B cell (primary cell): ENCODE measurements at regions of chr15 and their contacts with region 1.

Region 1: DNA sequence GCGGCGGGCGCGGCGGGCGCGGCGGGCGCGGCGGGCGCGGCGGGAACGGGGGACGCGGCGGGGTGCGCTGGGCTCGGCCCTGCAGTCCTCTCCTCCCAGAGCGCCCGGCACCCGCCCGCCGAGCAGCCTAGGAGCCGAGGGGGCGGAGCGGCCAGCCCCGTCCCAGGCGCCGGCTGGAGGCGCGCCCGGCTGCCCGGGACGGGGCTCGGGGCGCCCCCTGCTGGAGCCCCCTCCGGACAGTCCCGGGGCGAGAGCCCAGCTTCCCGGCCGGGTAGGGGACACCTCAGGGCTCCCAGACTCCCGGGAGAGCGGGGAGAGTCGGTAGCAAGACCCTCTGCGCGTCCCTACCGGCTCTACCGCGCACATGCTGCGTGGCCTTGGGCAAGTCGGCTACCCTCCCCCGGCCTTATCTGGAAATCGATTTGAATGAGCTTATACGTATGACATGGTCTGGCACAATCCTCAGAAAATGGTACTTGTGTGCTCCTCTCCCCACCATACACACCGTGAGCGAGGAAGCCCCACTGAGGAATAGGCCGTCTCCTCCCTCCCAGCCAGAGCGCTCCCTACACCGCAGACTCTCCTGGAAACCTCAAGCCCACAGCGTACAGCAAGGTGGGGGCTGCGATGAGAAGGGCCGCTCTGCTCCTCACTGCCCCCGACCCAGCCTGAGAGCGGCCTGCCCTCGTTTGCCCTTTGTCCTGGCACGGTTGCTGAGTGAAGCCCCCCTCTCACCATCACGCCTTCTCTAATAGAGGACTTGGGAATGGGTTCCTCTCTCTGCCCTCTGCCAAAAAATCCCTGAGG is at the start of gene DAPK2:
- DNase-seq: peak; percentile 70
- ATAC-seq: peak; percentile 61
- H3K4me3 ChIP-seq: peak within 1 kb of the TSS; percentile 34 to 54 (median 43)
- H3K4me3 Mint-ChIP-seq: peak within 1 kb of the TSS; percentile 86
- H3K27ac ChIP-seq: no peak within 1 kb of the TSS
- H3K27ac Mint-ChIP-seq: peak within 1 kb of the TSS; percentile 91
- H3K4me1 ChIP-seq: peaks cover 61 to 71% of the 10 kb centered on the region in 2 donors
- H3K4me1 Mint-ChIP-seq: peaks cover 59% of the 10 kb centered on the region
- H3K27me3 ChIP-seq: no peaks in the 10 kb centered on the region
- H3K27me3 Mint-ChIP-seq: no peaks in the 10 kb centered on the region
- CTCF ChIP-seq: peak; percentile 67
- total RNA-seq, gene DAPK2: 31.0 and 31.9 TPM in 2 replicates

Region 2: DNA sequence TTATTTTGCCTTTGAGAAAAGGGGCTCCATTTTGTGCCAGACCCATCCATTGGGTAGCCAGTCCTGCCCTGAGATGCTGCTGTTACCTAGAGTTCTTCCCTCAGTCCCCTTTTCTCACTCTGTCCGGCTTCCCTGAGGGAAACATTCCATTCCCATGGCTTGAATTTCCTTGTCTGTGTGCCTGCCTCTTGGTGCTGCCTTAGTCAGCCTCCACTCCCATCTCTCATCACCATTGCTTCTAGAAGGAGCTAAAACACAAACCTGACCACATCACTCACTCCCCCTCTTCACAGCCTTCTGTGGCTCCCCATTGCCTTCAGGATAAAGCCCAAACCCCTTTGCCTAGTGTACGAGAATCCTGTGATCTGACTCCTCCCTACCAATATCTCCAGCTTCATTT is 1856.3 kb before region 1 on chr15:
- CTCF ChIA-PET with region 1: no interaction called
- POLR2A ChIA-PET with region 1: no interaction called
- intact Hi-C with region 1: no loop called
- DNase-seq: no peak
- ATAC-seq: no peak
- H3K4me3 ChIP-seq: no peak overlapping the region
- H3K4me3 Mint-ChIP-seq: no peak overlapping the region
- H3K27ac ChIP-seq: no peak overlapping the region
- H3K27ac Mint-ChIP-seq: no peak overlapping the region
- H3K4me1 ChIP-seq: no peaks in the 10 kb centered on the region
- H3K4me1 Mint-ChIP-seq: no peaks in the 10 kb centered on the region
- H3K27me3 ChIP-seq: peaks cover 0 to 3% (median 0%) of the 10 kb centered on the region in 4 experiments
- H3K27me3 Mint-ChIP-seq: peaks cover 23% of the 10 kb centered on the region
- CTCF ChIP-seq: no peak

Region 3: GRCh38 chr15:63565536-63566186 is 480.9 kb before region 1 on chr15:
- CTCF ChIA-PET with region 1: no interaction called
- POLR2A ChIA-PET with region 1: no interaction called
- intact Hi-C with region 1: no loop called
- DNase-seq: no peak
- ATAC-seq: no peak
- H3K4me3 ChIP-seq: no peak overlapping the region
- H3K4me3 Mint-ChIP-seq: no peak overlapping the region
- H3K27ac ChIP-seq: no peak overlapping the region
- H3K27ac Mint-ChIP-seq: peak overlapping the region; percentile 8
- H3K4me1 ChIP-seq: no peaks in the 10 kb centered on the region
- H3K4me1 Mint-ChIP-seq: peaks cover 15% of the 10 kb centered on the region
- H3K27me3 ChIP-seq: no peaks in the 10 kb centered on the region
- H3K27me3 Mint-ChIP-seq: no peaks in the 10 kb centered on the region
- CTCF ChIP-seq: no peak

Region 4: GRCh38 chr15:63826528-63826927 is 220.0 kb before region 1 on chr15:
- CTCF ChIA-PET with region 1: interaction called, 13 read pairs
- POLR2A ChIA-PET with region 1: interaction called, 3 read pairs
- intact Hi-C with region 1: loop called (anchors 5 kb)
- DNase-seq: peak; percentile 62
- ATAC-seq: peak; percentile 31
- H3K4me3 ChIP-seq: no peak overlapping the region
- H3K4me3 Mint-ChIP-seq: no peak overlapping the region
- H3K27ac ChIP-seq: no peak overlapping the region
- H3K27ac Mint-ChIP-seq: peak overlapping the region; percentile 73
- H3K4me1 ChIP-seq: peaks cover 4 to 13% of the 10 kb centered on the region in 2 donors
- H3K4me1 Mint-ChIP-seq: peaks cover 58% of the 10 kb centered on the region
- H3K27me3 ChIP-seq: no peaks in the 10 kb centered on the region
- H3K27me3 Mint-ChIP-seq: no peaks in the 10 kb centered on the region
- CTCF ChIP-seq: peak; percentile 56

Region 5: DNA sequence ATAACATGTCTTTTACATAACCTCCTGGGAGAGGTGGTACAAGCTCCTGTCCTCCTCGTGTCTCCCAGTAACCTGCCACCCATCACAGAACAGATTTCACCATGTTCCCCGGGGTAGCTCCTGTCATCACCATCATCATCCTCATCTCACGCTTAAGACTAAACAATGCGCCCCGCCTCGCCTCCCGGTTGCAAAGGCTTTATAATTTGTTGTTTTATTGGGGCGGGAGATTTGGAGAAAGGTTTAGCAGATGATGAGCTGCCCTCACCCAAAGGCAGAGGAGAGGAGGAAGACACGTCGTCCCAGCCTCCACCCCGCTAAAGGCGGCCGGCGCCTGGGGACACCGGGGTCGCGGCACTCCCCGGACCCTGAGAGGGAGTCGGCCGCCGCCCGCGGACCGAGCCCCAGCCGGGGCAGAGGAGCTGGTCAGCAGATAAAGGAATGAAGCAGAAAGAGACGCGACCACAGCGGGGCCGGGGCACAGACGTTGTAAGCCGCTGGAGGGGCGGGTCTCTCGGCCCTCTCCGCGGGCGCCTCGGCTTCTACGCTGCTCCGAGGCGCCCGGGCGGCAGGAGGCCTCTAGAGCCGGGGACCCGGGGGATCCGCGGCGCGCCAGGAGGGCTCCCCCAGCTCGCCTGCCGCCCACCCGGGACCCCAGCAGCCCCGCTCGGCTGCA is 213.4 kb before region 1 on chr15:
- CTCF ChIA-PET with region 1: interaction called, 10 read pairs
- POLR2A ChIA-PET with region 1: interaction called, 3 read pairs
- intact Hi-C with region 1: loop called (anchors 5 kb)
- DNase-seq: no peak
- ATAC-seq: peak; percentile 39
- H3K4me3 ChIP-seq: peak overlapping the region; percentile 83 to 95 (median 93)
- H3K4me3 Mint-ChIP-seq: peak overlapping the region; percentile 91
- H3K27ac ChIP-seq: peak overlapping the region; percentile 90
- H3K27ac Mint-ChIP-seq: peak overlapping the region; percentile 87
- H3K4me1 ChIP-seq: peaks cover 22 to 27% of the 10 kb centered on the region in 2 donors
- H3K4me1 Mint-ChIP-seq: peaks cover 39% of the 10 kb centered on the region
- H3K27me3 ChIP-seq: no peaks in the 10 kb centered on the region
- H3K27me3 Mint-ChIP-seq: no peaks in the 10 kb centered on the region
- CTCF ChIP-seq: no peak

Region 6: GRCh38 chr15:63891079-63891767 is 155.3 kb before region 1 on chr15:
- CTCF ChIA-PET with region 1: interaction called, 8 read pairs
- POLR2A ChIA-PET with region 1: no interaction called
- intact Hi-C with region 1: loop called (anchors 1 kb)
- DNase-seq: peak; percentile 84
- ATAC-seq: peak; percentile 67
- H3K4me3 ChIP-seq: no peak overlapping the region
- H3K4me3 Mint-ChIP-seq: no peak overlapping the region
- H3K27ac ChIP-seq: no peak overlapping the region
- H3K27ac Mint-ChIP-seq: peak overlapping the region; percentile 37
- H3K4me1 ChIP-seq: peaks cover 30 to 35% of the 10 kb centered on the region in 2 donors
- H3K4me1 Mint-ChIP-seq: peaks cover 37% of the 10 kb centered on the region
- H3K27me3 ChIP-seq: no peaks in the 10 kb centered on the region
- H3K27me3 Mint-ChIP-seq: no peaks in the 10 kb centered on the region
- CTCF ChIP-seq: peak; percentile 95

Region 7: GRCh38 chr15:63920504-63921175 is 125.9 kb before region 1 on chr15:
- CTCF ChIA-PET with region 1: interaction called, 11 read pairs
- POLR2A ChIA-PET with region 1: no interaction called
- intact Hi-C with region 1: no loop called
- DNase-seq: no peak
- ATAC-seq: no peak
- H3K4me3 ChIP-seq: no peak overlapping the region
- H3K4me3 Mint-ChIP-seq: no peak overlapping the region
- H3K27ac ChIP-seq: no peak overlapping the region
- H3K27ac Mint-ChIP-seq: peak overlapping the region; percentile 59
- H3K4me1 ChIP-seq: no peaks in the 10 kb centered on the region
- H3K4me1 Mint-ChIP-seq: peaks cover 8% of the 10 kb centered on the region
- H3K27me3 ChIP-seq: no peaks in the 10 kb centered on the region
- H3K27me3 Mint-ChIP-seq: no peaks in the 10 kb centered on the region
- CTCF ChIP-seq: no peak

Region 8: DNA sequence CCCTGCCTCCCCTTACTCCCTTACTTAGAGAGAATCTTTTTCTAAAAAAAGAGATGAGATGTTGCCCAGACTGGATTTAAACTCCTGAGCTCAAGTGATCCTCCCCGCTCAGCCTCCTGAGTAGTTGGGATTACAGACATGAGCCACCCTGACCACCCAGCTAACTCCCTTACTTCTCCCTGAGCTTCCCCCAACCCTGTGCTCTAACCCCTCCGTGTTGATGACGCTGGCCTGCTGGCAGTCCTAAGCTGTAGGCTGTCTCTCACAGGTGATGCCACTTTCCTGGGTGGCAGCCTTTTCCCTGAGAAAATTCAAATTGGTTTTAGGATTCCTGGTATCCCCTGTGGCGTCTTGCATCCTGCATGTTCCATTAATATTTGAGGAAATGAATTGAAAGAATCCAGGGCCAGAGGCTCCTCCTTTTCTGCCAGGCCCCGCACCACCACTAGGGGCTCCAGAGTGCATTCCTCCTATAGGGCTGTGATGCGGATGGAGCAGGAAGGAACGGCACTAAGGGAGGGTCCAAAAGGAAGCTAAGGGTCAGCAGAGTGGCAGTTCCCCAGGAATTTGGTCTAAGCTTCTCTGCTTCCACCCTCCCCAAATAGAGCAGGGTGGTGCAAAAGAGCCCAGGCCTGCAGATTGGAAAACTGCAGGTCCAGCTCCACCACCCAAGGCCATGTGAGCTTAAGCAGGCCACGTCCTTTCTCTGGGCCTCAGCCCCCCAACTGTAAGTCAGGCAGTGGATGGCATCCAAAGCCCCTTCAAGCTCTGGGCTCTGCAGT is 101.4 kb before region 1 on chr15:
- CTCF ChIA-PET with region 1: interaction called, 45 read pairs
- POLR2A ChIA-PET with region 1: no interaction called
- intact Hi-C with region 1: loop called (anchors 5 kb)
- DNase-seq: peak; percentile 69
- ATAC-seq: peak; percentile 78
- H3K4me3 ChIP-seq: no peak overlapping the region
- H3K4me3 Mint-ChIP-seq: no peak overlapping the region
- H3K27ac ChIP-seq: no peak overlapping the region
- H3K27ac Mint-ChIP-seq: peak overlapping the region; percentile 23
- H3K4me1 ChIP-seq: peaks cover 13 to 26% of the 10 kb centered on the region in 2 donors
- H3K4me1 Mint-ChIP-seq: peaks cover 25% of the 10 kb centered on the region
- H3K27me3 ChIP-seq: peaks cover 0 to 2% (median 0%) of the 10 kb centered on the region in 4 experiments
- H3K27me3 Mint-ChIP-seq: no peaks in the 10 kb centered on the region
- CTCF ChIP-seq: peak; percentile 98

Region 9: GRCh38 chr15:63986751-63987341 is 59.7 kb before region 1 on chr15:
- CTCF ChIA-PET with region 1: interaction called, 37 read pairs
- POLR2A ChIA-PET with region 1: no interaction called
- intact Hi-C with region 1: loop called (anchors 1 kb)
- DNase-seq: peak; percentile 79
- ATAC-seq: peak; percentile 90
- H3K4me3 ChIP-seq: no peak overlapping the region
- H3K4me3 Mint-ChIP-seq: peak overlapping the region; percentile 70
- H3K27ac ChIP-seq: peak overlapping the region; percentile 57 to 63
- H3K27ac Mint-ChIP-seq: peak overlapping the region; percentile 96
- H3K4me1 ChIP-seq: peaks cover 46 to 56% of the 10 kb centered on the region in 2 donors
- H3K4me1 Mint-ChIP-seq: peaks cover 62% of the 10 kb centered on the region
- H3K27me3 ChIP-seq: no peaks in the 10 kb centered on the region
- H3K27me3 Mint-ChIP-seq: no peaks in the 10 kb centered on the region
- CTCF ChIP-seq: no peak

Region 10: GRCh38 chr15:64112904-64113303 is 66.4 kb after region 1 on chr15:
- CTCF ChIA-PET with region 1: no interaction called
- POLR2A ChIA-PET with region 1: no interaction called
- intact Hi-C with region 1: no loop called
- DNase-seq: no peak
- ATAC-seq: no peak
- H3K4me3 ChIP-seq: no peak overlapping the region
- H3K4me3 Mint-ChIP-seq: no peak overlapping the region
- H3K27ac ChIP-seq: peak overlapping the region; percentile 83 to 92
- H3K27ac Mint-ChIP-seq: peak overlapping the region; percentile 67
- H3K4me1 ChIP-seq: peaks cover 40 to 46% of the 10 kb centered on the region in 2 donors
- H3K4me1 Mint-ChIP-seq: peaks cover 47% of the 10 kb centered on the region
- H3K27me3 ChIP-seq: no peaks in the 10 kb centered on the region
- H3K27me3 Mint-ChIP-seq: no peaks in the 10 kb centered on the region
- CTCF ChIP-seq: no peak

Region 11: DNA sequence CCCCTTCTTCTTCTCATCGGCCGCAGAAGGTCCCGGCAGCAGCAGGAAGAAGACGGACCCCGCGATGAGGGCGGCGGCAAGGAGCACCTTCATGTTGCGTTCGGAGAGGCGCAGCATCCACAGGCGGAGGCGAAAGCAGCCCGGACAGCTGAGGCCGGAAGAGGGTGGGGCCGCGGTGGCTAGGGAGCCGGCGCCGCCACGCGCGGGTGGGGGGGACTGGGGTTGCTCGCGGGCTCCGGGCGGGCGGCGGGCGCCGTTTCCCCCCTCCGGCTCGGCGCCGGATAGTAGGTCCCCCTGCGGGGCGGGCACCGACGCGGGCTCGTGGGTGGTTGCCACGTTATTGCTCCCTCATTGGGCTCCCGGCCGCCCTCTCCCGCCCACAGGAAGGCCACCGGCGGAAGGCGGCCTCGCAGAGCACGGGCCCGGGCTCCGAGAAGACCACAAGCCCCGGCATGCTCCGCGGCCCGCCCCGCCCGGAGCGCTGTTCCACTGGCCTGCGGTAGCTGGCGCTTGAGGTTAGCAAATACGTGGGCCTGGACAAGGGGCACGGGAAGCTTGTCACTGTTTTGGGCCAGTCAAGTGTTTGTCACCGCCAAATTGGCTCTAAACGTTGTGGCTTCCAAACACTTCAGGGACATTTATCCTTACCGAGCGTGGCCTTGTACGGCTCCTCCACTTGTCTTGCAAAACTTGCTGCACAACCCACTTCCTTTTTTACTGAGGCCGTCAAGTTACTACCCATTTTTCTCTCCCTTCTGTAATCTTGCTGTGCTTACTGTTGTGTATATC is 116.5 kb after region 1 on chr15 and contains the start of gene PPIB:
- CTCF ChIA-PET with region 1: no interaction called
- POLR2A ChIA-PET with region 1: no interaction called
- intact Hi-C with region 1: no loop called
- DNase-seq: peak; percentile 98
- ATAC-seq: peak; percentile 91
- H3K4me3 ChIP-seq: peak within 1 kb of the TSS; percentile 65 to 86 (median 85)
- H3K4me3 Mint-ChIP-seq: peak within 1 kb of the TSS; percentile 92
- H3K27ac ChIP-seq: peak within 1 kb of the TSS; percentile 72 to 87
- H3K27ac Mint-ChIP-seq: peak within 1 kb of the TSS; percentile 96
- H3K4me1 ChIP-seq: peaks cover 42 to 58% of the 10 kb centered on the region in 2 donors
- H3K4me1 Mint-ChIP-seq: peaks cover 52% of the 10 kb centered on the region
- H3K27me3 ChIP-seq: no peaks in the 10 kb centered on the region
- H3K27me3 Mint-ChIP-seq: no peaks in the 10 kb centered on the region
- CTCF ChIP-seq: peak; percentile 32
- total RNA-seq, gene PPIB: 107 and 108 TPM in 2 replicates